Left lung (tissue), 14 donors: ENCODE measurements at regions of chr10 and their contacts with region 1.

Region 1: GRCh38 chr10:62048919-62049623 is 147.6 kb downstream of the ARID5B start:
- DNase-seq: peak; percentile 73 to 86 (median 82)
- ATAC-seq: peak; percentile 83
- H3K4me3 ChIP-seq: peak overlapping the region; percentile 23 to 33
- H3K27ac ChIP-seq: peak overlapping the region; percentile 73 to 92
- H3K4me1 ChIP-seq: peaks cover 23 to 93% of the 10 kb centered on the region in 2 donors
- H3K27me3 ChIP-seq: no peaks in the 10 kb centered on the region
- CTCF ChIP-seq: no peak

Region 2: DNA sequence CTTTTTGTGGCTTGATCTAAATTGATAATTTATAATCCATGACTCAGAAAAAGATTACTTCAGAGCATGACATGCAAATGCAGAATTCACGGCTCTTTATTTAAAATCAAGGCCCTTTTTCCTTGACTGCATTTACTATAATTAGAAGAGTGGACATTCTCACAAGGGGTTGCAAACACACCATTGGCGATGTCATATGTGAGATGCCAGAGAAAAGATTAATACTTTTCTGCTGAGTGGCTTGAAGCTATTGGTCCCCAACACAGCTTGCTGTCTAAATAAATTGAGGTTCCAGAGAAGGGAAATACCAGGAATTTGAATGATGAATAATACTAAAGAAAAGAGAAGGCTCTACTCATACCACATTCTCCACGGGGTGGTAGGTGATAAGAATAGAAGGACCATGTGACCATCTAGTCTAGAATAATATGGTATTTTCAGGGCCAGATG is 226.3 kb before region 1 on chr10:
- intact Hi-C with region 1: no loop called
- DNase-seq: no peak
- ATAC-seq: no peak
- H3K4me3 ChIP-seq: no peak overlapping the region
- H3K27ac ChIP-seq: no peak overlapping the region
- H3K4me1 ChIP-seq: no peaks in the 10 kb centered on the region
- H3K27me3 ChIP-seq: no peaks in the 10 kb centered on the region
- CTCF ChIP-seq: no peak

Region 3: GRCh38 chr10:61903221-61903927 is 145.7 kb before region 1 on chr10:
- intact Hi-C with region 1: loop called in 1 of 2 experiments (anchors 10 kb)
- DNase-seq: peak; percentile 54 to 93 (median 74)
- ATAC-seq: peak; percentile 63
- H3K4me3 ChIP-seq: peak overlapping the region; percentile 62 to 78
- H3K27ac ChIP-seq: peak overlapping the region; percentile 99
- H3K4me1 ChIP-seq: peaks cover 7 to 48% of the 10 kb centered on the region in 2 donors
- H3K27me3 ChIP-seq: no peaks in the 10 kb centered on the region
- CTCF ChIP-seq: no peak

Region 4: DNA sequence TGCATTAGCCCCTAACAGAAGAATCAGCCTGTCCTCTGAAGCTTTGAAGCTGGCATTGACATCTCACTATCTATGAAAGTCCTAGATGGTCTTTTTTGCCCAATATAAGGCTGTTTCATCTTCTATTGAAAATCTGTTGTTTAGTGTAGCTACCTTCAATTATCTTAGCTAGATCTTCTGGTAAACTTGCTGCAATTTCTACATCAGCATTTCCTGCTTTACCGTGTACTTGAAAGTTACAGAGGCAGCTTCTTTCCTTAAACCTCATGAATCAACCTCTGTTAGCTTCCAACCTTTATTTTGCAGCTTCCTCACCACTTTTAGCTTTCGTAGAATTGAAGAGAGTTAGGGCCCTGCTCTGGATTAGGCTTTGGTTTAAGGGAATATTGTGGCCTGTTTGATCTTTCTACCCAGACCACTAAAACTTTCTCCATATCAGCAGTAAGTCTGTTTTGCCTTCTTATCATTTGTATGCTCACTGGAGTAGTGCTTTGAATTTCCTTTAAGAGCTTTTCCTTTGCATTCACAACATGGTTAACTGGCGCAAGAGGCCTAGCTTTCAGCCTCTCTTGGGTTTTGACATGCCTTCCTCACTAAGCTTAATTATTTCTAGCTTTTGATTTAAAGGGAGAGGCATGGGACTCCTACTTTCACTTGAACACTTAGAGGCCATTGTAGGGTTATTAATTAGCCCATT is 115.1 kb before region 1 on chr10:
- intact Hi-C with region 1: no loop called
- DNase-seq: peak in 1 of 4 donors; percentile 53
- ATAC-seq: peak; percentile 63
- H3K4me3 ChIP-seq: no peak overlapping the region
- H3K27ac ChIP-seq: peak overlapping the region; percentile 37 to 40
- H3K4me1 ChIP-seq: peaks cover 20 to 36% of the 10 kb centered on the region in 2 donors
- H3K27me3 ChIP-seq: no peaks in the 10 kb centered on the region
- CTCF ChIP-seq: no peak

Region 5: GRCh38 chr10:62244780-62245467 is 195.9 kb after region 1 on chr10:
- intact Hi-C with region 1: loop called in 1 of 2 experiments (anchors 10 kb)
- DNase-seq: peak in 2 of 4 donors; percentile 74 to 84
- ATAC-seq: peak; percentile 91
- H3K4me3 ChIP-seq: peak overlapping the region in 1 of 2 donors; percentile 36
- H3K27ac ChIP-seq: peak overlapping the region in 1 of 2 donors; percentile 90
- H3K4me1 ChIP-seq: peaks cover 4 to 36% of the 10 kb centered on the region in 2 donors
- H3K27me3 ChIP-seq: no peaks in the 10 kb centered on the region
- CTCF ChIP-seq: peak; percentile 74 to 88

Region 6: GRCh38 chr10:62278441-62278910 is 229.4 kb after region 1 on chr10:
- intact Hi-C with region 1: no loop called
- DNase-seq: no peak
- ATAC-seq: no peak
- H3K4me3 ChIP-seq: no peak overlapping the region
- H3K27ac ChIP-seq: no peak overlapping the region
- H3K4me1 ChIP-seq: no peaks in the 10 kb centered on the region
- H3K27me3 ChIP-seq: no peaks in the 10 kb centered on the region
- CTCF ChIP-seq: no peak